Mammary epithelial cell (primary cell): ENCODE measurements at regions of chr7 and their contacts with region 1.

Region 1: GRCh38 chr7:24800667-24801066 is 43.4 kb upstream of the GSDME start:
- DNase-seq: no peak
- H3K4me3 ChIP-seq: no peak overlapping the region
- H3K27ac ChIP-seq: no peak overlapping the region
- H3K4me1 ChIP-seq: no peaks in the 10 kb centered on the region
- H3K27me3 ChIP-seq: no peaks in the 10 kb centered on the region
- CTCF ChIP-seq: no peak

Region 2: GRCh38 chr7:24722386-24723177 is 78.1 kb before region 1 on chr7:
- CTCF ChIA-PET with region 1: no interaction called
- dilution Hi-C with region 1: no loop called
- in situ Hi-C with region 1: no loop called
- intact Hi-C with region 1: no loop called
- DNase-seq: no peak
- H3K4me3 ChIP-seq: no peak overlapping the region
- H3K27ac ChIP-seq: no peak overlapping the region
- H3K4me1 ChIP-seq: peaks cover 15% of the 10 kb centered on the region
- H3K27me3 ChIP-seq: no peaks in the 10 kb centered on the region
- CTCF ChIP-seq: peak; percentile 18 to 45

Region 3: GRCh38 chr7:24851786-24852185 is 51.1 kb after region 1 on chr7:
- CTCF ChIA-PET with region 1: no interaction called
- dilution Hi-C with region 1: no loop called
- in situ Hi-C with region 1: no loop called
- intact Hi-C with region 1: no loop called
- DNase-seq: peak; percentile 40
- H3K4me3 ChIP-seq: no peak overlapping the region
- H3K27ac ChIP-seq: no peak overlapping the region
- H3K4me1 ChIP-seq: peaks cover 6% of the 10 kb centered on the region
- H3K27me3 ChIP-seq: no peaks in the 10 kb centered on the region
- CTCF ChIP-seq: no peak

Region 4: GRCh38 chr7:25087855-25088254 is 287.2 kb after region 1 on chr7:
- CTCF ChIA-PET with region 1: no interaction called
- dilution Hi-C with region 1: no loop called
- in situ Hi-C with region 1: loop called in 1 of 2 experiments (anchors 10 kb)
- intact Hi-C with region 1: no loop called
- DNase-seq: no peak
- H3K4me3 ChIP-seq: no peak overlapping the region
- H3K27ac ChIP-seq: no peak overlapping the region
- H3K4me1 ChIP-seq: peaks cover 7% of the 10 kb centered on the region
- H3K27me3 ChIP-seq: no peaks in the 10 kb centered on the region
- CTCF ChIP-seq: no peak